ENCODE measurements at regions of chr2 and their contacts with region 1.

Region 1: GRCh38 chr2:51722311-51722710 is 690.4 kb upstream of the NRXN1 start:
- DNase-seq: no peak
- ATAC-seq: no peak
- H3K4me3 ChIP-seq: no peak overlapping the region
- H3K27ac ChIP-seq: no peak overlapping the region
- H3K4me1 ChIP-seq: no peaks in the 10 kb centered on the region
- H3K27me3 ChIP-seq: no peaks in the 10 kb centered on the region
- CTCF ChIP-seq: no peak

Region 2: DNA sequence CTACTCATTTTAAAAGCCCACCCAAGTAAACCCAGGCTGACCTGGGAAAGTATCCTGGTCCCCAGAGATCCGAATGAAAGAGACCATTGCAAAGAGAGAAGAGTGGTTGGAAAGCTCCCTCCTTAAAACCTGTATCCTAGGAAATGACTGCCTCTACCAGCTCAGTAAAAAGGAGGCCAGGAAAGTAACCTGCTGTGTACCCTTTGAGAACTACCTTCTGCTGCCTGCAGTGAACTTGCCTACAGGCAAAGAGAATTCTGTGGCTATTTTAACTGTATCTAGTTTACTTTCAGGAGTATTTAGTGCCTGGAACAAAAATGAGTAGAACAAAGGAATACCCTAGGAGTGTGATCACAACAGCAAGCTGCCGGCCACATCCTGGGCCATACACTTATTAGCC is 48.7 kb before region 1 on chr2:
- CTCF ChIA-PET with region 1: no interaction called
- POLR2A ChIA-PET with region 1: no interaction called
- in situ Hi-C with region 1: no loop called
- intact Hi-C with region 1: loop called (anchors 5 kb)
- DNase-seq: no peak
- ATAC-seq: no peak
- H3K4me3 ChIP-seq: no peak overlapping the region
- H3K27ac ChIP-seq: no peak overlapping the region
- H3K4me1 ChIP-seq: no peaks in the 10 kb centered on the region
- H3K27me3 ChIP-seq: no peaks in the 10 kb centered on the region
- CTCF ChIP-seq: no peak

Region 3: DNA sequence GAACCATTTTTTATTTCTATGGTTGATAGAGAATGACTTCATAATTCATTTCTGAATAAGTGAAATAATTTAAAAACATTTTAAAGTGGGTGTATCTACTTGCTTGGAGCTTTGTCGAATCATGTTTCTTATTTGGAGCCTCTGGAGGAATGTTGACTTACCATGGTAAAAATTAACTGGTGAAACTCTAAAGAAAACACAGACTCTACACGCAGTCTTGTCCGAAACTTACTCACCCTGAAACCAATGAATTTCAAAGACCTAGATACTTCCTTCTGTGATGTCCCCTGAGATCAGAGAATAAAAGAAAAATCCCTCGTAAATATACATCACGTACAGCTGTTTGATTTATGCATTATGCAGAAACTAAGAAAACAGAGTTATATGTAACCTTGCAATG is 25.2 kb before region 1 on chr2:
- CTCF ChIA-PET with region 1: no interaction called
- POLR2A ChIA-PET with region 1: no interaction called
- in situ Hi-C with region 1: no loop called
- intact Hi-C with region 1: no loop called
- DNase-seq: no peak
- ATAC-seq: no peak
- H3K4me3 ChIP-seq: no peak overlapping the region
- H3K27ac ChIP-seq: no peak overlapping the region
- H3K4me1 ChIP-seq: no peaks in the 10 kb centered on the region
- H3K27me3 ChIP-seq: no peaks in the 10 kb centered on the region
- CTCF ChIP-seq: no peak